B cell (primary cell): ENCODE measurements at regions of chr19 and their contacts with region 1.

Region 1: GRCh38 chr19:18192673-18193387 is at the start of gene MPV17L2:
- DNase-seq: peak; percentile 100
- ATAC-seq: peak; percentile 83
- H3K4me3 ChIP-seq: peak within 1 kb of the TSS; percentile 76 to 92 (median 82)
- H3K4me3 Mint-ChIP-seq: peak within 1 kb of the TSS; percentile 93
- H3K27ac ChIP-seq: peak within 1 kb of the TSS; percentile 86 to 93
- H3K27ac Mint-ChIP-seq: peak within 1 kb of the TSS; percentile 97
- H3K4me1 ChIP-seq: peaks cover 25 to 40% of the 10 kb centered on the region in 2 donors
- H3K4me1 Mint-ChIP-seq: peaks cover 38% of the 10 kb centered on the region
- H3K27me3 ChIP-seq: no peaks in the 10 kb centered on the region
- H3K27me3 Mint-ChIP-seq: no peaks in the 10 kb centered on the region
- CTCF ChIP-seq: no peak
- total RNA-seq, gene MPV17L2: 6.5 and 8.6 TPM in 2 replicates

Region 2: DNA sequence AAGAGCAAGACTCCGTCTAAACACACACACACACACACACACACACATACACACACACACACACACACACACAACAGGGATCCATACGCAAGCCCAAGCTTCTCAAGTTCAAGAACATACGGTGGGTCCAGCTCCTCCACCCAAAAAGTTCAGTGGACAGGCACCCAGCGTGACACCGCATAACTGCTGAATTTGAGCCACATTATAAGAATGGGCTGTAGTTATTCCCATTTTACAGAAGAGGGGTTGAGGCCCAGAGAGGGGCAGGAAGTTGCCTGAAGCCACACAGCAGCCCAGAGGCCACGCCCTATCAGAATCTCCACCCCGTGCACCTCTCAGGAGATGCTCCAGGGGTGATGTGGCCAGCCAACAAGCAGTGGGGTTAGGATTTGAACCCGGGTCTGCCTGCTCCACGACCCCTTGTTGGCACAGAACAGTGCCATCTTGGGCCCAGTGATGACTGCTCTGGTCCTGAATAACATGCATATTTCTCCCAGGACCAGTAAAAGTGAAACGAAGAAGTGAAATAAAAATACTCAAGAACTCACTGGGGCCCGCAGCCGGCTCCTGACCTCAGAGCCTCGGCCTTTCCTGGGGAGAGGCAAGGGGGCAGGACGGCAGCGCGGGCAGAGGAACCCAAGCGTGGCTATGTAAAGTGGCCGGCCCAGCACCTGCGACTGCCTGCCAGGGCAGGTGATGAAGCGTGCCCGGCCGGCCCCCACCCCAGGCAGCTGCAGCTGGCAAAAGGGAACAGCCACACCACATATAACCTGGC is 1933.3 kb before region 1 on chr19:
- CTCF ChIA-PET with region 1: no interaction called
- POLR2A ChIA-PET with region 1: interaction called, 13 read pairs
- intact Hi-C with region 1: no loop called
- DNase-seq: peak; percentile 94
- ATAC-seq: peak; percentile 79
- H3K4me3 ChIP-seq: peak overlapping the region in 1 of 5 experiments; percentile 42
- H3K4me3 Mint-ChIP-seq: peak overlapping the region; percentile 78
- H3K27ac ChIP-seq: peak overlapping the region; percentile 87 to 89
- H3K27ac Mint-ChIP-seq: peak overlapping the region; percentile 95
- H3K4me1 ChIP-seq: peaks cover 75 to 94% of the 10 kb centered on the region in 2 donors
- H3K4me1 Mint-ChIP-seq: peaks cover 83% of the 10 kb centered on the region
- H3K27me3 ChIP-seq: no peaks in the 10 kb centered on the region
- H3K27me3 Mint-ChIP-seq: no peaks in the 10 kb centered on the region
- CTCF ChIP-seq: no peak

Region 3: DNA sequence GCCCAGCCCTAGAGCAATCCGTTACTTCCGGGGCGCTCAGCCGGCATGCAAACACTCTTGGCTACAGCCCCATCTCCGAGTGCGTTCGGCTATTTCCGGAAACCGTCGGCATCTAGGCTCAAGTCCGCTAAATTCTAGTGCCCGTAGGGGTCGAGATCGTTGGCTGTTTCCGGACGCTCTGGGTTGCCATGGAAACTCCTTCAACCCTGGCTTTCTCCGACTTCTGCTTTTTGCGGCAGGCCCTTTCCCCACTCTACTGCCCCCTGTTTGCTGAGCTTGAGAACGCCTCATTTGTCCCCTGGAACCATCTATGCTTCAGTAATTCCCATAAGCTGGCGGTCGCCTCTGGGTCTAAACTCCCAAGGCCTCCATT is 40.4 kb before region 1 on chr19:
- CTCF ChIA-PET with region 1: interaction called, 4 read pairs
- POLR2A ChIA-PET with region 1: interaction called, 6 read pairs
- intact Hi-C with region 1: loop called (anchors 1 kb)
- DNase-seq: peak; percentile 100
- ATAC-seq: peak; percentile 71
- H3K4me3 ChIP-seq: peak overlapping the region; percentile 63 to 88 (median 70)
- H3K4me3 Mint-ChIP-seq: peak overlapping the region; percentile 89
- H3K27ac ChIP-seq: peak overlapping the region; percentile 90 to 93
- H3K27ac Mint-ChIP-seq: peak overlapping the region; percentile 95
- H3K4me1 ChIP-seq: peaks cover 14 to 25% of the 10 kb centered on the region in 2 donors
- H3K4me1 Mint-ChIP-seq: peaks cover 23% of the 10 kb centered on the region
- H3K27me3 ChIP-seq: no peaks in the 10 kb centered on the region
- H3K27me3 Mint-ChIP-seq: no peaks in the 10 kb centered on the region
- CTCF ChIP-seq: peak; percentile 88

Region 4: GRCh38 chr19:18173572-18174288 is 19.1 kb before region 1 on chr19 and contains the start of gene IFI30:
- CTCF ChIA-PET with region 1: interaction called, 28 read pairs
- POLR2A ChIA-PET with region 1: interaction called, 45 read pairs
- intact Hi-C with region 1: loop called (anchors 1 kb)
- DNase-seq: peak; percentile 97
- ATAC-seq: peak; percentile 65
- H3K4me3 ChIP-seq: peak within 1 kb of the TSS; percentile 67 to 97 (median 83)
- H3K4me3 Mint-ChIP-seq: peak within 1 kb of the TSS; percentile 94
- H3K27ac ChIP-seq: peak within 1 kb of the TSS; percentile 97 to 99
- H3K27ac Mint-ChIP-seq: peak within 1 kb of the TSS; percentile 98
- H3K4me1 ChIP-seq: peaks cover 72 to 90% of the 10 kb centered on the region in 2 donors
- H3K4me1 Mint-ChIP-seq: peaks cover 84% of the 10 kb centered on the region
- H3K27me3 ChIP-seq: no peaks in the 10 kb centered on the region
- H3K27me3 Mint-ChIP-seq: no peaks in the 10 kb centered on the region
- CTCF ChIP-seq: no peak
- total RNA-seq, gene IFI30: 171 TPM in 2 replicates

Region 5: DNA sequence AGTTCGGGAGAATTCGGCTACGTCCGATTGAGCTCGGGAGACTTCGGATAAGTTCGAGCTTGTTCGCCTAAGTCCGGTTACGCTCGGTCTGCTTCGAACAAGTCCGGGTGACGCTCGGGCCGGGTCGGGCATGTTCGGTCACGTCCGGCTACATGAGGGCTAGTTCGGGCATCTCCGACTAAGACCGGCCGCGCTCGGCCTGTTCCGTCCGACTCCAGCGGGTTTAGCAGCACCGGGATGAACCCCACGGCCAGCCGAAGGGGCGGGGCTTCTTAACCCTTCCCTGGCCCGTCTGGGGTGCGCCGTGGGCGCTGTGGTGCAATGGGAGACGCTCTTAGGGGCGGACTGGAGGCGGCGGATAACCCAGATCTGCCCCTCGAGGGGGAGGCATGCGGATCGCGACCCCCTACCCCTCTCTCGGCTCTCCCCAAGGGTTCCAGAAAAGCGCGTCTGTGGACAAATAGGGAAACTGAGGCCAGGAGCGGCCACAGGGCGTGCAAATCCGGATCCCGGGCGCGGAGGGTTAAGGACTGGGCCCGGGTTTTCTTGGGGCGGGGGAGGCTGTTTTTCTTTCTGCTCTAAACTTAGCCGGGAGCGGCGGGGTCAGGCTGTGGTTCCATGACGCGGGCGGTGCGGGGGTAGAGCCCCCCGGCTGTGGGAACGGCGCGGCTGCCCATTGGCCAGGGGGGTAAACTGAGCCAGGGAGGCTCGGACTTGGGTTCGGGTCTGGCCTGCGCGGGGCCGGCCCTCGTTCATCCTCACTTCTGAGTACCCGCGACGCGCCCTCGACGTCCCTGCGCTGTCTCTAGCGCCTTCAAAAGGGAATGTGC is 31.9 kb after region 1 on chr19:
- CTCF ChIA-PET with region 1: no interaction called
- POLR2A ChIA-PET with region 1: interaction called, 6 read pairs
- intact Hi-C with region 1: loop called (anchors 1 kb)
- DNase-seq: peak; percentile 93
- ATAC-seq: peak; percentile 99
- H3K4me3 ChIP-seq: peak overlapping the region; percentile 21 to 68 (median 46)
- H3K4me3 Mint-ChIP-seq: peak overlapping the region; percentile 91
- H3K27ac ChIP-seq: no peak overlapping the region
- H3K27ac Mint-ChIP-seq: peak overlapping the region; percentile 71
- H3K4me1 ChIP-seq: peaks cover 29 to 36% of the 10 kb centered on the region in 2 donors
- H3K4me1 Mint-ChIP-seq: peaks cover 36% of the 10 kb centered on the region
- H3K27me3 ChIP-seq: peaks cover 0 to 85% (median 41%) of the 10 kb centered on the region in 4 experiments
- H3K27me3 Mint-ChIP-seq: peaks cover 53% of the 10 kb centered on the region
- CTCF ChIP-seq: no peak